B cell (primary cell): ENCODE measurements at regions of chr16 and their contacts with region 1.

Region 1: DNA sequence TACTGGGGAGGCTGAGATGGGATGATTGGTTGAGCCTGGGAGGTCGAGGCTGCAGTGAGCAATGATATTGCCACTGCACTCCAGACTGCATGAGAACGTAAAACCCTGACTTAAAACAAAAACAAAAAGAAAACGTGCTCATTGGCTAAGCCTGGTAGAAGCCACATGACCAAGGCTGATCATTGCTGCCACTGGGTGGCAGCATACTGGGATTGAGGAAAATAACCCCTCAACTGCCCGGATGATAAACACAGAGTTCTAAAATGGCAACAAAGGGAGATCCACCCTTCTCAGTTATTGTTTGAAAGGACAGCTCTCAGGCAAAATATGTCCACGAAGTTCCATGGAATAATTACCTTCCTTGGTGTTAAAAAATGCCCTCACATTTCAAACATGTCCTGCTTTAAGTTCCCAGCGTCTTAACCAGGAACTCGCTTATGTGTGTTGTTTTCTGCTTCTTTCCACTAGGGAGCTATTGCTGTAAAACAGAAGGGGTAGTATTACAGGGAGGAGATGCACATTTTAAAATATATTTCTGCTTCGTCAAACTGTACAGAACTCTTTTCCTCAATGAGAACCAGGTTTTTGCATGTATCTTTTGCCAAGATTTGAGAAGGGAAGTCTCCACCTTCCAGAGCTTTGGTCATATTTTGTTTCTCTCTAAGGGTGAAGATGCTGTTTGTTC is 675.3 kb downstream of the MAF start:
- DNase-seq: peak; percentile 36
- ATAC-seq: no peak
- H3K4me3 ChIP-seq: no peak overlapping the region
- H3K4me3 Mint-ChIP-seq: no peak overlapping the region
- H3K27ac ChIP-seq: no peak overlapping the region
- H3K27ac Mint-ChIP-seq: no peak overlapping the region
- H3K4me1 ChIP-seq: no peaks in the 10 kb centered on the region
- H3K4me1 Mint-ChIP-seq: no peaks in the 10 kb centered on the region
- H3K27me3 ChIP-seq: no peaks in the 10 kb centered on the region
- H3K27me3 Mint-ChIP-seq: peaks cover 9% of the 10 kb centered on the region
- CTCF ChIP-seq: peak; percentile 41

Region 2: GRCh38 chr16:79047229-79047983 is 122.2 kb after region 1 on chr16:
- CTCF ChIA-PET with region 1: interaction called, 12 read pairs
- POLR2A ChIA-PET with region 1: no interaction called
- intact Hi-C with region 1: loop called (anchors 1 kb)
- DNase-seq: peak; percentile 40
- ATAC-seq: no peak
- H3K4me3 ChIP-seq: no peak overlapping the region
- H3K4me3 Mint-ChIP-seq: no peak overlapping the region
- H3K27ac ChIP-seq: no peak overlapping the region
- H3K27ac Mint-ChIP-seq: no peak overlapping the region
- H3K4me1 ChIP-seq: no peaks in the 10 kb centered on the region
- H3K4me1 Mint-ChIP-seq: peaks cover 2% of the 10 kb centered on the region
- H3K27me3 ChIP-seq: no peaks in the 10 kb centered on the region
- H3K27me3 Mint-ChIP-seq: peaks cover 5% of the 10 kb centered on the region
- CTCF ChIP-seq: peak; percentile 64